Heart left ventricle (tissue), 16 donors: ENCODE measurements at regions of chr2 and their contacts with region 1.

Region 1: GRCh38 chr2:204681412-204681811 is 136.1 kb downstream of the PARD3B start:
- DNase-seq: no peak
- ATAC-seq: peak in 2 of 4 donors; percentile 28 to 64
- H3K4me3 ChIP-seq: no peak overlapping the region
- H3K27ac ChIP-seq: peak overlapping the region in 1 of 12 donors; percentile 27
- H3K4me1 ChIP-seq: peaks cover 0 to 14% (median 2%) of the 10 kb centered on the region in 12 donors
- H3K27me3 ChIP-seq: no peaks in the 10 kb centered on the region
- CTCF ChIP-seq: no peak
- POLR2A ChIP-seq: no peak

Region 2: GRCh38 chr2:204452464-204453023 is 228.9 kb before region 1 on chr2:
- intact Hi-C with region 1: loop called in 1 of 10 experiments (anchors 10 kb)
- DNase-seq: peak in 4 of 5 donors; percentile 26 to 42 (median 36)
- ATAC-seq: peak; percentile 45 to 92 (median 88)
- H3K4me3 ChIP-seq: peak overlapping the region in 1 of 12 donors; percentile 9
- H3K27ac ChIP-seq: peak overlapping the region in 7 of 12 donors; percentile 0 to 74 (median 28)
- H3K4me1 ChIP-seq: peaks cover 0 to 28% (median 14%) of the 10 kb centered on the region in 12 donors
- H3K27me3 ChIP-seq: no peaks in the 10 kb centered on the region
- CTCF ChIP-seq: no peak
- POLR2A ChIP-seq: no peak

Region 3: GRCh38 chr2:204655131-204655530 is 26.3 kb before region 1 on chr2:
- intact Hi-C with region 1: no loop called
- DNase-seq: no peak
- ATAC-seq: peak in 1 of 4 donors; percentile 48
- H3K4me3 ChIP-seq: no peak overlapping the region
- H3K27ac ChIP-seq: no peak overlapping the region
- H3K4me1 ChIP-seq: peaks cover 0 to 6% (median 0%) of the 10 kb centered on the region in 12 donors
- H3K27me3 ChIP-seq: no peaks in the 10 kb centered on the region
- CTCF ChIP-seq: no peak
- POLR2A ChIP-seq: no peak